ENCODE measurements at regions of chr12 and their contacts with region 1.

Region 1: DNA sequence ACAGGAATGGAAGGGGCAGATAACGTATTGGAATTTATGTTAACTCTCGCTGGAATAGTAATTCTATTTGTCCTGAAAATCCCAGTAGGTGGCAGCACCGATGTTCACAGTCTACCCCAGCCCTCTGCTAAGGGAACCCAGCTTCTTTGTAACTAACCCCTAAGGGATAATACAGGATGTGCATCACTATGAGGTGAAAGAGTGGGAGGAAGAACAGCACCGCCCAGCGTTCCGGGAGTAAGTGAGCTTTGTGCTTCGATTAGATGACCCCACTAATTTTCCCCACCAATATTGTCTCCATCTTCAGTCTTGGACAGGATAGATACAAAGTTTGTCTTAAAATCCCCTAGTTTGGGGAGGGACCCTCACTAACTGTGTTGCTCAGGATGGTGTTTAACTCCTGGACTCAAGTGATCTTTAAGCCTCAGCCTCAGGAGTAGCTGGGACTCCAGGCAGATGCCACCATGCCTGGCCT is 2.7 kb downstream of the SLC2A3 start:
- DNase-seq: peak; percentile 53 to 94 (median 67)
- ATAC-seq: peak; percentile 70
- H3K4me3 ChIP-seq: peak overlapping the region; percentile 93
- H3K4me3 Mint-ChIP-seq: no peak overlapping the region
- H3K27ac ChIP-seq: peak overlapping the region; percentile 19 to 71
- H3K27ac Mint-ChIP-seq: no peak overlapping the region
- H3K4me1 ChIP-seq: peaks cover 47% of the 10 kb centered on the region
- H3K4me1 Mint-ChIP-seq: peaks cover 35% of the 10 kb centered on the region
- H3K27me3 ChIP-seq: no peaks in the 10 kb centered on the region
- H3K27me3 Mint-ChIP-seq: no peaks in the 10 kb centered on the region
- CTCF ChIP-seq: peak; percentile 87

Region 2: GRCh38 chr12:7869127-7869526 is 64.2 kb before region 1 on chr12:
- CTCF ChIA-PET with region 1: interaction called, 3 read pairs
- POLR2A ChIA-PET with region 1: no interaction called
- intact Hi-C with region 1: loop called (anchors 2 to 5 kb)
- DNase-seq: no peak
- ATAC-seq: no peak
- H3K4me3 ChIP-seq: no peak overlapping the region
- H3K4me3 Mint-ChIP-seq: no peak overlapping the region
- H3K27ac ChIP-seq: no peak overlapping the region
- H3K27ac Mint-ChIP-seq: no peak overlapping the region
- H3K4me1 ChIP-seq: peaks cover 7% of the 10 kb centered on the region
- H3K4me1 Mint-ChIP-seq: no peaks in the 10 kb centered on the region
- H3K27me3 ChIP-seq: peaks cover 23 to 24% of the 10 kb centered on the region in 2 experiments
- H3K27me3 Mint-ChIP-seq: peaks cover 43% of the 10 kb centered on the region
- CTCF ChIP-seq: no peak

Region 3: DNA sequence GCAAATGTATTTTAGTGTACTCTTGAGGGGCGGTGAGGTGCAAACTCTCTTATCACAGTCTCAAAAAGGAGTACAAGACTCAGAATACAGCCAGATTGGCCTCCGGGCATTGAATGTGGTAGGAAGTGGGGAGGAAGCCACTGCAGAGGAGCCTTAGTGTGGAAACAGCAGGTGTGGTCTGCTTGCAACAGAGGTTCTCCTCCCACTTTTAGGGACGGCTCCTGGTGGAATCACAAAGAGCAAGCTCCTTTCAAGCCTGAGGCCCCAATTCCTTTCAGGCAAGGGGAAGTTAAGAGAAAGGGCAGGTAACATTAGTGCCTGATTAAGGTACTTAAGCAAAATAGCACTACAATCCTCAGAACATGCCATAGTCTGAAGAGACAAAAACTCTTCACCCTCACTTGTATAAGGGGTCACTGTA is 26.4 kb after region 1 on chr12:
- CTCF ChIA-PET with region 1: interaction called, 175 read pairs
- POLR2A ChIA-PET with region 1: interaction called, 353 read pairs
- intact Hi-C with region 1: loop called (anchors 1 kb)
- DNase-seq: peak in 13 of 14 experiments; percentile 22 to 77 (median 37)
- ATAC-seq: peak; percentile 24
- H3K4me3 ChIP-seq: peak overlapping the region; percentile 64
- H3K4me3 Mint-ChIP-seq: peak overlapping the region; percentile 87
- H3K27ac ChIP-seq: peak overlapping the region; percentile 59 to 76
- H3K27ac Mint-ChIP-seq: peak overlapping the region; percentile 90
- H3K4me1 ChIP-seq: peaks cover 23% of the 10 kb centered on the region
- H3K4me1 Mint-ChIP-seq: peaks cover 34% of the 10 kb centered on the region
- H3K27me3 ChIP-seq: no peaks in the 10 kb centered on the region
- H3K27me3 Mint-ChIP-seq: no peaks in the 10 kb centered on the region
- CTCF ChIP-seq: no peak

Region 4: DNA sequence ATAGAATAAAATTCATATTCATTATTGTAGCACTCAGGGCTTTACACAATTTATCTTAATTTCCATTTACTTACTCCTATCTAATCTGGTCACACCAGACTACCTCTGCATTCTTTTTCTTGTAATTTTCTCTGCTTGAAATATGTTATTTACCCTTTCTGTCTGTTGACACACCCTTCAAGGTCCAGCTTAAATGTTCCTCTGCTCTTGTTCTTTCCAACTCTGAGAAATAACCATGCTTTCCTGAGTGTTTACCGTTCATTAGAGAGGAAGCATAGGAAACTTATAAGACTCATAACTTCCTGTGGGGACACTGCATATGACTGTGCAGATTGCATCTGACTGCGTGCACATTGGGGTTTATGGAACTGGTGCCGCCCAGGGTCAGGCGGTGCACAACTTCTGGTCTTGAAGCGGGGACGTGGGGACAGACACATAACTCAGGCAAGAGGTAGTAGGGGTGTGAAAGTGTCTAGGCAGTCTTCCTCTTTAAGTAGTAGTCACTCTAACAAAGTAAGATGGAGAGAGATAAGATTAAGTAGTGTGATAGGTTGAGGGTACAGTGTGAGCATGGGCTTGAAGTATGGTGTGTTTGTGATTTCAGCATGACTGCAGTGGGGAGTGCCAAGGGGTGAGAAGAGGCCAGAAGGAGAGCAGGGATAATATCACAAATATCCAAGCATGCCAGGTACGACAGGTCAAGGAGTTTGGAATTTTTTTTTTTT is 56.7 kb after region 1 on chr12:
- CTCF ChIA-PET with region 1: interaction called, 81 read pairs
- POLR2A ChIA-PET with region 1: interaction called, 57 read pairs
- intact Hi-C with region 1: loop called (anchors 1 kb)
- DNase-seq: peak; percentile 25 to 85 (median 63)
- ATAC-seq: peak; percentile 86
- H3K4me3 ChIP-seq: peak overlapping the region; percentile 19
- H3K4me3 Mint-ChIP-seq: peak overlapping the region; percentile 73
- H3K27ac ChIP-seq: peak overlapping the region; percentile 40 to 67
- H3K27ac Mint-ChIP-seq: peak overlapping the region; percentile 78
- H3K4me1 ChIP-seq: peaks cover 43% of the 10 kb centered on the region
- H3K4me1 Mint-ChIP-seq: peaks cover 20% of the 10 kb centered on the region
- H3K27me3 ChIP-seq: no peaks in the 10 kb centered on the region
- H3K27me3 Mint-ChIP-seq: no peaks in the 10 kb centered on the region
- CTCF ChIP-seq: no peak

Region 5: DNA sequence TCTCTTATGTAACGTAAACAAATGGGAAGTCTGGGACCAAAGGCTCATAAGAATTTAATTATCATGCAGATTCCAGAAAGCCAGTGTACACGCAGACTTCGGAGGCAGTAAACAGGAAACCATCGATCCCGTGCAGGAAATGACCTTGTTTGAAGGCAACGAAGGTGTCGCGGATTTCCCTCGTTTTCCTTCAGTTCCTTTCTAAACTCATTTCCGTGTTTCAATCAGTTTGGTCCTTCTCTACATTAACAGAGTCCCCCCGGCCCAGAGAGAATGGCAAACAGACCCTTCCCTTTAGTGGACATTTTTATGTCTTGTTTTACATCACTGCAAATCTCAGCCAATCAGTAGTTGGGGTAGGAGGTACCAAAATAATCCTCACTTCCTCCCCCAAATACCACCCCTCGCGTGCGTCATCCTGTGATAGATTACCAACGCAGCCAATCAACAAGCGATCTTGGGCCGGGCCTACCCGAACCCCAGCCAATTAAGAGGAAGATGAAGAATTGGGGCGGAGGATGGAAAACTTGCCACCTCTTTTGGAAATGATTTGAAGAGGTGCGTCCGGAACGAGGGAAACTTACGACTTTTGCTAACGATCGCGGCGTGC is 93.1 kb after region 1 on chr12:
- CTCF ChIA-PET with region 1: interaction called, 13 read pairs
- POLR2A ChIA-PET with region 1: interaction called, 51 read pairs
- intact Hi-C with region 1: loop called in 1 of 2 experiments (anchors 1 kb)
- DNase-seq: peak; percentile 86 to 99 (median 93)
- ATAC-seq: peak; percentile 88
- H3K4me3 ChIP-seq: peak overlapping the region; percentile 81
- H3K4me3 Mint-ChIP-seq: peak overlapping the region; percentile 92
- H3K27ac ChIP-seq: peak overlapping the region; percentile 98 to 100
- H3K27ac Mint-ChIP-seq: peak overlapping the region; percentile 99
- H3K4me1 ChIP-seq: peaks cover 20% of the 10 kb centered on the region
- H3K4me1 Mint-ChIP-seq: peaks cover 18% of the 10 kb centered on the region
- H3K27me3 ChIP-seq: no peaks in the 10 kb centered on the region
- H3K27me3 Mint-ChIP-seq: no peaks in the 10 kb centered on the region
- CTCF ChIP-seq: no peak

Region 6: GRCh38 chr12:8078398-8078797 is 145.1 kb after region 1 on chr12:
- CTCF ChIA-PET with region 1: interaction called, 13 read pairs
- POLR2A ChIA-PET with region 1: interaction called, 10 read pairs
- intact Hi-C with region 1: loop called (anchors 2 to 5 kb)
- DNase-seq: peak; percentile 44 to 89 (median 59)
- ATAC-seq: peak; percentile 28
- H3K4me3 ChIP-seq: no peak overlapping the region
- H3K4me3 Mint-ChIP-seq: peak overlapping the region; percentile 22
- H3K27ac ChIP-seq: no peak overlapping the region
- H3K27ac Mint-ChIP-seq: peak overlapping the region; percentile 98
- H3K4me1 ChIP-seq: peaks cover 16% of the 10 kb centered on the region
- H3K4me1 Mint-ChIP-seq: peaks cover 54% of the 10 kb centered on the region
- H3K27me3 ChIP-seq: no peaks in the 10 kb centered on the region
- H3K27me3 Mint-ChIP-seq: no peaks in the 10 kb centered on the region
- CTCF ChIP-seq: peak; percentile 70

Measured in CD4-positive, alpha-beta T cell (primary cell).